ENCODE measurements at regions of chr6 and their contacts with region 1.

Region 1: DNA sequence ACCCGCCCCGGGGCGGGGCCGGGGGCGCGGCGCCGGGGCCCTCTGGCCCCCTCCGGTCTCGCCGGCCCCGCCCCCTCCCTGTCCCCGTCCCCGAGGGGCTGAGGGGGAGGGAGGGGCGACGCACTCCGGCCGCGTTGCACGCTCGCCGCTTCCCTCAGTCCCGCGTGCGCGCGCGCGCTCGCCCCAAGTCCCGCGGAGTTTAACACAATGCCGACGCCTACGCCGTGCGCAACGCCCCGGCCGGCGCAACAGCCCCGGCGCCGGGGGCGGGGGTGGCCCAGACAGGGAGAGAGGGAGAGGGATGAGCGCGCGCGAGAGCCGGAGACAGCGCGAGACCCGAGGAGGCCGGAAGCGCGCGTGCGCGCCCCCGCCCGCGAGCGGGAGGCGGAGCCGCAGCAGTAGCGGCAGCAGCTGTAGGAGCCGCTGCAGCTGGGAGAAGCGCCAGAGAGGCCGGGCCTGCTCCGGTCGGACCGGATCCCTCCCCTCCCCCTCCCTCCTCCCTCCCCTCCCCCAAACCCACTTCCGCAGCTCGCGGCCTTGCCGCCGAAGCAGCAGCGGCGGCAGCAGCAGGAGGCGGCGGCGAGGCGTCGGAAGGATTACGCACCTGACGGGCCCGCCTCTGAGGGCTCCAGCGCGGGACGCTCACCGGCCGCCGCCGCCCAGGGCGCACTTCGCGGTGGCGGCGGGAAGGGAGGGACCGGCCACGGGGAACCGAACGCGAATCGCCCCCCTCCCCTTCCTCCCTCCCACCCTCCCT is 905 bp downstream of the ZBTB2 start:
- DNase-seq: peak; percentile 99
- H3K4me3 Mint-ChIP-seq: peak overlapping the region; percentile 64
- H3K27ac Mint-ChIP-seq: peak overlapping the region; percentile 85
- H3K4me1 Mint-ChIP-seq: peaks cover 65% of the 10 kb centered on the region
- H3K27me3 Mint-ChIP-seq: no peaks in the 10 kb centered on the region

Region 2: GRCh38 chr6:150511313-150511712 is 879.1 kb before region 1 on chr6:
- CTCF ChIA-PET with region 1: no interaction called
- POLR2A ChIA-PET with region 1: no interaction called
- DNase-seq: no peak
- H3K4me3 Mint-ChIP-seq: no peak overlapping the region
- H3K27ac Mint-ChIP-seq: no peak overlapping the region
- H3K4me1 Mint-ChIP-seq: no peaks in the 10 kb centered on the region
- H3K27me3 Mint-ChIP-seq: peaks cover 6% of the 10 kb centered on the region

Region 3: DNA sequence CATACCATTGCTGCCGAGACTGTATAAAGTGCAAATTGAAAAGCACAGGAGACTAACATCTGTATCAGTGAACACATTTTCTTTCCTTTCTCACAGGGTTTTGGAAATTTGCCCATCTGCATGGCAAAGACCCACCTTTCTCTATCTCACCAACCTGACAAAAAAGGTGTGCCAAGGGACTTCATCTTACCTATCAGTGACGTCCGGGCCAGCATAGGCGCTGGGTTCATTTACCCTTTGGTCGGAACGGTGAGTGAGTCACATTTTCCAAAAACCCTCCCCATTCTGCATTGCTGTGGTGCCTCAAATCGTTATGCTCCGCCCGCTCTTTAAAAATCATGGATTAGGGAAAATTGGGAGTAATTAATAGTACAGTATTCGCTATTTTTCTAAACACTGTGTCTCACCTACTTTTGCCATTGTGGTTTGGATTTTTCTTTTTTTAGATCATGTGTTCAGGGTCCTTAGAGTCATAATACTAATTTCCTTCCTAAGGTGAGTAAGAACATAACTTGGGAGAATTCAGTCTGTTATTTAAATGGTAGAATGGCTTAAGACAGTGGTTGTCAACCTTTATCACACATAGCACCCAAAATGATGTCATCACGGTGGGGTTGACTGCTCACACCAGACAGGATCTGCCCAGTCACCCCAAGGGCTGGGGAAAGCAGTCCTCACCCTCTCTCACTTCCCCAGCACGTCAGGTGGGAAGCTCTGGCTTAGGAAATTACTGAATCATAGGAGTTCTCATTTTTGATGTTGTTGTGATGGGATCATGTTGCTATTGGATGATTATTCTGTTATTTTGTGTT is 353.4 kb before region 1 on chr6:
- CTCF ChIA-PET with region 1: no interaction called
- POLR2A ChIA-PET with region 1: no interaction called
- DNase-seq: peak; percentile 24
- H3K4me3 Mint-ChIP-seq: no peak overlapping the region
- H3K27ac Mint-ChIP-seq: no peak overlapping the region
- H3K4me1 Mint-ChIP-seq: peaks cover 24% of the 10 kb centered on the region
- H3K27me3 Mint-ChIP-seq: no peaks in the 10 kb centered on the region

Region 4: DNA sequence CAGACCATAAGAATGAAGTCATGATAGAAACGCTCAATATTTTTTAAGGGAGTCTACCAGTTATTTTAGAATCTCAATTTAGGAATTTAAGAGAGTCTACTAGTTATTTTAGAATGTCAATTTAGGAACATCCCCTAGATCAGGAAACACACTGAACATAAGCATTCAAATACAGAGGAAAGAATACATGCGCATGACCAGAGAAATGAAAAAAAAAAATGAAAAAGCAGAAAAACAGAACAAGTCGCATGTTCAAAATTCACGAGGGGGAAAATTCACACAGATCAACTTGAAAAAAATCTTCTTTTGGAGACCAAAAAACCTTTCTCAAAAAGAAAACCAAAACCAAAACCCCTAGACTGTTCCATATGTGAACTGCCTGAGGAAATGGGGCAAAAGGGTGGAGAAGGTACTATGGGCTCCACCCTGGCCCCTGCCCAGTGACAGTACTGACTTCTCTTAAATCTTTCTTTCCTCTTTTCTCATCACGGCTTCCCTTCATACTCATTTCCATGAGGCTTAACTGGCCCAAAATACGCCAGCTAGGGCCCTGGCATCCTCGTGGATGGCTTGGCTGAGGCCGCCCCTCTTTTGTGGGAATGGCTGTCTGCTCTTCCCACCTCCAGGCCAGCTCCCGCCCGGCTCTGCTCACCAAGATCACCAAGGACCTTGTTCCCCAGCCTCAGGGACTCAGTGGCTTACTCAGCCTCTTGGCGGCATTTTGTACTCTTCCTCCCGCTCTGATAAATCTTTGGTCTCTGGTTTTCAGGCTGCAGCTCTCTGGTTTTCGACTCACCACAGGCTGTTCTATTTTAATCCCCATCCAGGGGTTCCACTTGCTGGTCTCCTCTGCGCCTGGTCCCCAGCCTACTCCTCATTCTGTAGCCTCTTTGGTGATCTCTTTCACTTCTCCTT is 10.3 kb before region 1 on chr6:
- CTCF ChIA-PET with region 1: interaction called, 19 read pairs
- POLR2A ChIA-PET with region 1: interaction called, 247 read pairs
- DNase-seq: peak; percentile 46
- H3K4me3 Mint-ChIP-seq: peak overlapping the region; percentile 80
- H3K27ac Mint-ChIP-seq: peak overlapping the region; percentile 96
- H3K4me1 Mint-ChIP-seq: peaks cover 75% of the 10 kb centered on the region
- H3K27me3 Mint-ChIP-seq: no peaks in the 10 kb centered on the region

Region 5: GRCh38 chr6:151409260-151409659 is 18.8 kb after region 1 on chr6:
- CTCF ChIA-PET with region 1: interaction called, 22 read pairs
- POLR2A ChIA-PET with region 1: interaction called, 10 read pairs
- DNase-seq: no peak
- H3K4me3 Mint-ChIP-seq: no peak overlapping the region
- H3K27ac Mint-ChIP-seq: no peak overlapping the region
- H3K4me1 Mint-ChIP-seq: peaks cover 19% of the 10 kb centered on the region
- H3K27me3 Mint-ChIP-seq: no peaks in the 10 kb centered on the region

Region 6: GRCh38 chr6:151729829-151730495 is 339.5 kb after region 1 on chr6:
- CTCF ChIA-PET with region 1: no interaction called
- POLR2A ChIA-PET with region 1: no interaction called
- DNase-seq: no peak
- H3K4me3 Mint-ChIP-seq: no peak overlapping the region
- H3K27ac Mint-ChIP-seq: no peak overlapping the region
- H3K4me1 Mint-ChIP-seq: no peaks in the 10 kb centered on the region
- H3K27me3 Mint-ChIP-seq: no peaks in the 10 kb centered on the region